Motor neuron (in vitro differentiated cells): ENCODE measurements at regions of chr9 and their contacts with region 1.

Region 1: GRCh38 chr9:78035383-78035993 is 3.9 kb upstream of the GNAQ start:
- ATAC-seq: peak in 2 of 8 experiments; percentile 0 to 1
- H3K4me3 ChIP-seq: no peak overlapping the region
- H3K27ac ChIP-seq: no peak overlapping the region
- H3K4me1 ChIP-seq: peaks cover 3 to 16% of the 10 kb centered on the region in 2 donors

Region 2: GRCh38 chr9:77793904-77794303 is 241.6 kb before region 1 on chr9:
- in situ Hi-C with region 1: loop called in 1 of 9 experiments (anchors 25 kb)
- ATAC-seq: peak; percentile 48 to 99 (median 76)
- H3K4me3 ChIP-seq: no peak overlapping the region
- H3K27ac ChIP-seq: no peak overlapping the region
- H3K4me1 ChIP-seq: peaks cover 0 to 1% of the 10 kb centered on the region in 2 donors

Region 3: GRCh38 chr9:77864211-77864889 is 171.1 kb before region 1 on chr9:
- in situ Hi-C with region 1: loop called in 1 of 9 experiments (anchors 25 kb)
- ATAC-seq: peak in 1 of 8 experiments; percentile 35
- H3K4me3 ChIP-seq: no peak overlapping the region
- H3K27ac ChIP-seq: no peak overlapping the region
- H3K4me1 ChIP-seq: peaks cover 4 to 6% of the 10 kb centered on the region in 2 donors